SK-N-SH (cell line): ENCODE measurements at regions of chr9 and their contacts with region 1.

Region 1: GRCh38 chr9:4339357-4339756 is 39.5 kb upstream of the GLIS3 start:
- DNase-seq: peak; percentile 64
- H3K4me3 ChIP-seq: peak overlapping the region in 1 of 2 experiments; percentile 52; a peak in 1 of 4 replicates
- H3K27ac ChIP-seq: no peak overlapping the region
- H3K4me1 ChIP-seq: no peaks in the 10 kb centered on the region; a peak in 1 of 4 replicates
- H3K27me3 ChIP-seq: no peaks in the 10 kb centered on the region
- CTCF ChIP-seq: peak; percentile 98
- EP300 ChIP-seq: no peak
- RAD21 ChIP-seq: peak; percentile 84

Region 2: DNA sequence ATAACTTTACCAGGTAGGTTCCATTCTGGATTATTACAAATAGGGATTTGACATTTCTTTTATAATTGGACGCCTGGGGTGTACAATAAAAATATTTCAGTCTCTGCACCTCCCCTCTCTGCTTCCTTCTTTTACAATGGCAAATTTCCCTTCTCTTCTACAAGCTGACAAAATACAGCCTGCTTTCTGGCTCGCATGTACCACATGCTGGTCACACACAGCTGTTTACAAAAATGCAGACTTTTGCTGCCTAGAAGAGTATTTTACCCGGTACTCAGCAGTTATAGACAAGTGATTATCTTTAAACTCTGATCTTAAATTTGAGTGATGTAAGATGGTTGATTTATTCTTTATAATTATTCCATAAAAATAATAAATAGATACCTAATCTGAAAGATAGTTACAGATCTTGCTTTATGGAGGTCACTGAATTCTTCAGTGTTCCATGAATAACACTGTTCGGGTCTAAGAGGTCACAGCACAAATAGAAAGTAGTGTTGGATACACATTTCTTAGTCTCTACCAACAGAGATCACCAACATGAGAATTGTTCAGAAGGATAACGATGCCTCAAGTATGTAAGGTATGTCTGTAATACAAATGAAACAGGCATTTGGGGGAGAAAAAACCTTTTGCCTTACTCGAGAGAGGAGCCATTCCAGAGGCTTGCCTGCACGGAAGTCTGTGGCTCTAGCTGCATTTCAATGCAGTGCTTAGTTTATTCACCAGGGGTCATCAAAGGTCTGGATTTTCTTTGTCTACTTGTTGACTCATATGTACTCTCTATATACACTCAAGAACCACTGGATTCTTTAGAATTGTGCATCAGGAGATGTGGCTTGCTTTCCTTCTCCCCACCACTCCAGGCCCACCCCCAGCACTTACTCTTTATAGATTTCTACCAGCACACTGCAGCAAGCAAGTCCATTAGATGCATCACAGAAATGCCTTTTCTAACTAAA is 607.0 kb before region 1 on chr9:
- CTCF ChIA-PET with region 1: interaction called, 28 read pairs
- POLR2A ChIA-PET with region 1: no interaction called
- DNase-seq: peak; percentile 77
- H3K4me3 ChIP-seq: peak overlapping the region in 1 of 2 experiments; percentile 33; a peak in 1 of 4 replicates
- H3K27ac ChIP-seq: peak overlapping the region in 1 of 2 experiments; percentile 34; a peak in 1 of 4 replicates
- H3K4me1 ChIP-seq: peaks cover 0 to 4% of the 10 kb centered on the region in 2 experiments; a peak in 1 of 4 replicates
- H3K27me3 ChIP-seq: no peaks in the 10 kb centered on the region
- CTCF ChIP-seq: peak; percentile 87
- EP300 ChIP-seq: no peak
- RAD21 ChIP-seq: peak; percentile 98

Region 3: GRCh38 chr9:4315582-4316215 is 23.7 kb before region 1 on chr9:
- CTCF ChIA-PET with region 1: interaction called, 50 read pairs
- POLR2A ChIA-PET with region 1: no interaction called
- DNase-seq: peak; percentile 76
- H3K4me3 ChIP-seq: peak overlapping the region in 1 of 2 experiments; percentile 24; a peak in 1 of 4 replicates
- H3K27ac ChIP-seq: no peak overlapping the region
- H3K4me1 ChIP-seq: peaks cover 3 to 14% of the 10 kb centered on the region in 2 experiments; a peak in 2 of 4 replicates
- H3K27me3 ChIP-seq: no peaks in the 10 kb centered on the region
- CTCF ChIP-seq: peak; percentile 92
- EP300 ChIP-seq: no peak
- RAD21 ChIP-seq: peak; percentile 92

Region 4: DNA sequence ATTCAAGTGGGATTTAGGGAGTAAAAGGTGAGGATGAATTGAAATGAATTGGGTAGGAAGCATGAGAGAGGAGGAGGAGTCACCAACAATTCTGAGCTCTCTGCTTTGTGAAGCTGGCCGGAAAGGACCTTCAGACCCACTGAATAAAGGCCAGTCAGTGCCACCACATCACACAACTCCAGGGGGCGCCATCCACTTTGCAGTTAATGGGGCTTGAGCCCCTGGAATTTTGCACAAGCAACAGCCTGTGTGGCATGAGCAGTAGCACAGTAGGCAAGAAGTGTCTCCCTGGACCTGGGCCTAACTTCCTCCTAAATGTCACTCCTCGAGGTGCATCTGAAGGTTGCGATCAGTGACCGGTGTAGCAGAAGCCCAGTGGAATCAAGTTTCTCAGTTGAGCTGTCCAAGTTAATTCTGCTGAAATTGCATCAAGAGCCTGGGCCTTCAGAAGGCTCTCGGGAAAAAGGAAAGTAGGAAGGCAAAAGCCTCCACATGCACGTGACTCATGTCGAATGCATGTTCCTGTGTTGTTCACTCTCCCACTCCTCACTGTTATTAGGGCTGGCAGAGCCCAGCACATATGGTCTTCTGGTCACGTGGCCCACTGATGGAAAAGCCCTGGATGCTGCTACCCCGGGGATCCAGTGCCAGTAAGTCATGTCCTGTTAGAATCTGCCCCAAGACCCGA is 11.7 kb before region 1 on chr9:
- CTCF ChIA-PET with region 1: interaction called, 19 read pairs
- POLR2A ChIA-PET with region 1: no interaction called
- DNase-seq: no peak
- H3K4me3 ChIP-seq: no peak overlapping the region
- H3K27ac ChIP-seq: peak overlapping the region; percentile 1 to 72; a peak in 3 of 4 replicates
- H3K4me1 ChIP-seq: peaks cover 3 to 7% of the 10 kb centered on the region in 2 experiments; a peak in 2 of 4 replicates
- H3K27me3 ChIP-seq: no peaks in the 10 kb centered on the region
- CTCF ChIP-seq: peak; percentile 64
- EP300 ChIP-seq: peak in 1 of 2 experiments; percentile 44; a peak in 1 of 4 replicates
- RAD21 ChIP-seq: no peak

Region 5: GRCh38 chr9:4353236-4353635 is 13.9 kb after region 1 on chr9:
- CTCF ChIA-PET with region 1: interaction called, 20 read pairs
- POLR2A ChIA-PET with region 1: no interaction called
- DNase-seq: no peak
- H3K4me3 ChIP-seq: no peak overlapping the region
- H3K27ac ChIP-seq: no peak overlapping the region
- H3K4me1 ChIP-seq: no peaks in the 10 kb centered on the region
- H3K27me3 ChIP-seq: no peaks in the 10 kb centered on the region
- CTCF ChIP-seq: no peak
- EP300 ChIP-seq: no peak
- RAD21 ChIP-seq: no peak

Region 6: DNA sequence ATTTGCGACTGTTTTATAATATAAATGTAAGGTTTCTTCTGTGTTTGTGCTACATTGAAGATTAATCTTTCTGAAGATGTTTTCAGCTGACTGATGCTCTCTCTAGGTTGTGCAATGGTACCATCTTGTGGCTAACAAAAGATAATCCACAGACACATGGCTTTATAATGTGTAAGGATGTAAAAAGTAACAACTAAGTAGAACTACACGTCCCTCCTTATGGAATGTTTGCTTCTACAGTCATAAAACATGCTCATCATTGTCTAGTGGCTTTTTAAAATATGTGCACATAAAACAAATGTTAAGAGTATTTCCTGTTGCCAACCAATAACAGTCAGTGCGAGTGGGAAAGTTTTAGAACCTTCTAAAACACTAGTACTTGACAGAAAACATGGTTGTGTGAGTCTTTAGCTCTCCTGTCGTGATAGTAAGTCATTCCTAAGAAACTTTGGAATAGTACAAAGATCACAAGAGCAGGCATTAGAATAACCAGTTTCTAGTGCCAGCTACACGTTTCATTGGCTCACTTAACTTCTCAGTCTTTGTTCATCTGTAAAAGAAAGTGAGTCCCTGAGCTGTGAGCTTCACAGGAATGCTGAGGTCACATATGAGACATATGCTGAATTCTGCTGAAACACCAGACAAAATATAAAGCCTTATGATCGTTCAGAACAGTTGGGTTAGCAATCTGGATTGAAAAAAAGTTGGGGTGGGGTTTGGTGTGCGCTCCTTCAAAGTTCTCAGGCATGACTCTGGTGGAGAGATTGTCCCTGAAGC is 36.3 kb after region 1 on chr9:
- CTCF ChIA-PET with region 1: interaction called, 11 read pairs
- POLR2A ChIA-PET with region 1: no interaction called
- DNase-seq: peak; percentile 27
- H3K4me3 ChIP-seq: no peak overlapping the region
- H3K27ac ChIP-seq: peak overlapping the region in 1 of 2 experiments; percentile 63; a peak in 2 of 4 replicates
- H3K4me1 ChIP-seq: no peaks in the 10 kb centered on the region; a peak in 1 of 4 replicates
- H3K27me3 ChIP-seq: no peaks in the 10 kb centered on the region
- CTCF ChIP-seq: peak; percentile 80
- EP300 ChIP-seq: no peak
- RAD21 ChIP-seq: peak; percentile 89